AG04450 (cell line): ENCODE measurements at regions of chr3 and their contacts with region 1.

Region 1: GRCh38 chr3:127652231-127652995 is 20.3 kb upstream of the ABTB1 start:
- DNase-seq: no peak
- H3K4me3 ChIP-seq: no peak overlapping the region
- H3K27ac ChIP-seq: no peak overlapping the region
- H3K27me3 ChIP-seq: peaks cover 2% of the 10 kb centered on the region
- CTCF ChIP-seq: peak; percentile 89

Region 2: DNA sequence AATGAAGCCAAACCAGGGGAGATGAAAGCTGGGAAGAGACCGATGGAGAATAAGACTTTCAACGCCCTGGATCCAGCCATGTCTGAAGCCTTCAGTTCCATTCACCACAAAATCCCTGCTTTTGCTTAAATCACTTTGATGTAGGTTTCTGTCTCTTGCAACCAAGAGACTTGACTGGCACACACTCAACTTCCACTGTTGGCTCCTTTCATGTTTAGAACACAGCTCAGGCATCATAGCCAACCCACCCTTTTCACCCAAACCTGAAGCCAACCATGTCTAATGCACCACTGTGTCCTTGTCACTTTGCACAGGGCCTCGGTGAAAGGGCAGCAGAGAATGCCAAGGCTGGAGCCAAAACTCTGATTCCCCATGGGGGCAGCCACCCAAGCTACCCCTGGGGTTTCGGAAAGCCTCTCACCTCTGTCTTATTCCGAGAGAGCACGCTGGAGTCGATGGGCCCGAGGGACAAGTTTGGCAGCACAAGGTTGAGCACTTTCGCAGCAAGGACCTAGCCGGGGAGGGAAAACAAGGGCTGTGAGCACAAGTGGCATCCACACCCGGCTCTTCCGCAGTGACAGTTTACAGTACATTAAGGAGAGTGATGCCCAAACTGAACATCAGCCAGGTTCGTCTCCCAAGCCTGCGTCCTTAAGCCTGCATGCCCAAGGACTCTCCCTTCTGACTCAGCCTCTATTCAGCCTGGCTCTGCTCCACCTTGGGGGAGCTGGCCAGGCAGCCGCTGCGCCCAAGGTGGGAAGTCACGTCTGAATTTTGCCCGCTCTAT is 57.9 kb after region 1 on chr3:
- CTCF ChIA-PET with region 1: no interaction called
- POLR2A ChIA-PET with region 1: no interaction called
- DNase-seq: no peak
- H3K4me3 ChIP-seq: no peak overlapping the region
- H3K27ac ChIP-seq: no peak overlapping the region
- H3K27me3 ChIP-seq: no peaks in the 10 kb centered on the region
- CTCF ChIP-seq: no peak

Region 3: GRCh38 chr3:127831723-127832172 is 179.3 kb after region 1 on chr3:
- CTCF ChIA-PET with region 1: interaction called, 23 read pairs
- POLR2A ChIA-PET with region 1: no interaction called
- DNase-seq: no peak
- H3K4me3 ChIP-seq: no peak overlapping the region
- H3K27ac ChIP-seq: no peak overlapping the region
- H3K27me3 ChIP-seq: no peaks in the 10 kb centered on the region
- CTCF ChIP-seq: peak; percentile 69

Region 4: GRCh38 chr3:127959846-127960245 is 307.4 kb after region 1 on chr3:
- CTCF ChIA-PET with region 1: interaction called, 18 read pairs
- POLR2A ChIA-PET with region 1: no interaction called
- DNase-seq: no peak
- H3K4me3 ChIP-seq: no peak overlapping the region
- H3K27ac ChIP-seq: no peak overlapping the region
- H3K27me3 ChIP-seq: peaks cover 16% of the 10 kb centered on the region
- CTCF ChIP-seq: peak; percentile 40; the same call in 1 of the 2 replicates